ENCODE measurements at regions of chr13 and their contacts with region 1.

Region 1: DNA sequence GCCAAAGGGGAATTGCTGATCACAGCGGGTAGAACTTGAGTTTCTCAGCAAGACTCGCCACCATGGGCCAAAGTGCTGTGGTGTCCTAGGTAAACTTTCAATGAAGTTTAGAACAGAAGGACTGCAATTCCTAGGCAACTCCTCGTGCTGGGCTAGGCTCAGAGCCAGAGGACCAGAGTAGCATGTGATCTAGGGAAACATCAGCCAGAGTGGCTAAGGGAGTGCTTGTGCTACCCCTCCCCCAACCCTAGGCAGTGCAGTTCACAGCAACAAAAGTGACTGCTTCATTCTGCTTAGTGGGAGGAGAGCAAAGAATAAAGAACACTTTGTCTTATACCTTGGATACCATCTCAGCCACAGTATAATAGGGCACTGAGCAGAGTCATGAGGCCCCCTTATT is 1658.6 kb upstream of the MIR17HG start:
- DNase-seq: peak in 3 of 5 donors; percentile 26 to 36 (median 26)
- ATAC-seq: peak; percentile 45 to 85 (median 52)
- H3K4me3 ChIP-seq: no peak overlapping the region
- H3K27ac ChIP-seq: no peak overlapping the region
- H3K4me1 ChIP-seq: peaks cover 0 to 7% (median 0%) of the 10 kb centered on the region in 12 donors
- H3K27me3 ChIP-seq: no peaks in the 10 kb centered on the region
- CTCF ChIP-seq: no peak
- POLR2A ChIP-seq: no peak

Region 2: GRCh38 chr13:89432997-89433396 is 255.9 kb before region 1 on chr13:
- intact Hi-C with region 1: loop called in 1 of 10 experiments (anchors 10 kb)
- DNase-seq: no peak
- ATAC-seq: no peak
- H3K4me3 ChIP-seq: no peak overlapping the region
- H3K27ac ChIP-seq: no peak overlapping the region
- H3K4me1 ChIP-seq: no peaks in the 10 kb centered on the region
- H3K27me3 ChIP-seq: no peaks in the 10 kb centered on the region
- CTCF ChIP-seq: no peak
- POLR2A ChIP-seq: no peak

Region 3: GRCh38 chr13:90565985-90566713 is 877.2 kb after region 1 on chr13:
- intact Hi-C with region 1: no loop called
- DNase-seq: no peak
- ATAC-seq: no peak
- H3K4me3 ChIP-seq: no peak overlapping the region
- H3K27ac ChIP-seq: no peak overlapping the region
- H3K4me1 ChIP-seq: no peaks in the 10 kb centered on the region
- H3K27me3 ChIP-seq: no peaks in the 10 kb centered on the region
- CTCF ChIP-seq: no peak
- POLR2A ChIP-seq: no peak